Sigmoid colon (tissue), 7 donors: ENCODE measurements at regions of chr1 and their contacts with region 1.

Region 1: DNA sequence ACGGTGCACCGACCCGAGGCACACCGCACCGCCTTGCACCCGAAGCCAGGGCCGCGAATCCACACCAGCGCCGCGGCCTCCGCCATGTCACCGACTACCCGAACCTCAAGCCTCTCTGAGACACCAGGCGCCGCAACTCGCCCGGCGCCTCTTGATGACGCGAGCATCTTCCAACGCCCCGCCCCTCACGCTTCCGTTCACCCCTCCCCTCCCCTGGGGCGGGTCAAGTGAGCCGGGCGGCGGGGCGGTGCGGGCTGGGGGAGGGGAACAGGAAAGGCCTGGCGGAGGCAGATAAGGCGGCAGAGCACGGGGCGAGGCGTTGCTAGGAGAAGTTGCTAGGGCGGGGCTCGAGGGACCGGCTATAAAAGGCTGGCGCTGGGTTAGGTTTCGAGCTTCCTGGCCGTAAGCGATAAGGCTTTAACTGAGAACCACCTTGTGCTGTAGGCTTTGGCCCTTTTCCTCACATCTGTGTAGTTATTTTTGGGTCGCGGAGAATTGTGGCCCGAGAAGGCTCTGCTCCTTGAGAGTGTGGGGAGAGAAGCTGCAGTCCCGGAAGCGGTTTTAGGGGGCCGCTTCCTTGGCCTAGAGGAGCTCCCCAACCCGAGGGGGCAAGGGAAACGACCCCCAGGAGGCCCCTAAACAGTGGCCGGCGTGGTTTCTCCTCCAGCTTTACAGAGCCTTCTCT is at the start of gene SDE2:
- DNase-seq: peak; percentile 100
- H3K4me3 ChIP-seq: peak within 1 kb of the TSS; percentile 56 to 90 (median 81)
- H3K27ac ChIP-seq: peak within 1 kb of the TSS; percentile 95 to 98 (median 97)
- H3K4me1 ChIP-seq: peaks cover 0 to 36% (median 26%) of the 10 kb centered on the region in 4 donors
- H3K27me3 ChIP-seq: no peaks in the 10 kb centered on the region
- CTCF ChIP-seq: peak in 1 of 4 experiments; percentile 20
- EP300 ChIP-seq: peak in 2 of 4 donors; percentile 68 to 84
- POLR2A ChIP-seq: peak; percentile 81 to 87
- total RNA-seq, gene SDE2: 11.1 to 21.9 (median 18.4) TPM

Region 2: DNA sequence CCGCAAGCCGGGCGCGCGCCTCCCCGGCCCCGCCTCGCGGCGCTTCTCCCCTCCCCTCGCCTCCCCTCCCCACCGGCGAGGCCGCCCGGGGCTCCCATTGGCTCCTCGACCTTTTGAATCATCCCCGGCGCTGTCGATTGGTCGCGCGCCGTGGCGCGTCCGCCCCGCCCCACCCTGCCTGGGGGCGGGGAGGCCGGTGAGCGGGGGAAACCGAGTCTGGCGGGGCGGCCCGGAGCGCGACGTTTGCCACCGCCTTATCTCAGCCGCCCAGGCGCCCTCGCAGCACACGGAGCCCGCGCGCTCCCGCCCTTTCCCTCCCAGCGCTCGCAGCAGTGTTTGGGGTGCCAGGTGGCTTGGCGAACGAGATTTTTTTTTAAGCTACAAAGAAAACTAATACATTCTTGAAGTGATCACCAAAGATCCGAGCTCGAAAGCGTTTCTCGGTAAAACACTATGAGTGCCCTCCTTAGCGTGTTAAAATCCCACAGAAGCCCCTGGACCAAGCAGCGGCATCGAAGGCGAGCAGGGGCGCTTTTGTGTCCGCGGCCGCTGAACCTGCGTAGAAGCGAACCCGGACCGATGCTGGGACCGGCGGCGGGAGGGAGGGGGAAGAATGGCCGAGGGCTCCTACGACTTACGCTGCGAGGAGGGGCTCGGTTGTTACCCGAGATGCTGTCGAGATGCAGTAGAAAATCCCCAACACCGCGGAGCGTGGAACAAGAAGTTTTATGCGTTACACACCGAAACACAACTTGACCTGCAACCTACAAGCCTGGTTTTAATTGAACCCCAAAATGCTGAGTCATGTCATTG is 571.1 kb before region 1 on chr1:
- intact Hi-C with region 1: loop called (anchors 5 kb)
- DNase-seq: peak; percentile 97
- H3K4me3 ChIP-seq: peak overlapping the region; percentile 89 to 100 (median 94)
- H3K27ac ChIP-seq: peak overlapping the region; percentile 95 to 100 (median 98)
- H3K4me1 ChIP-seq: peaks cover 0 to 40% (median 32%) of the 10 kb centered on the region in 4 donors
- H3K27me3 ChIP-seq: no peaks in the 10 kb centered on the region
- CTCF ChIP-seq: no peak
- EP300 ChIP-seq: peak in 1 of 4 donors; percentile 2
- POLR2A ChIP-seq: peak; percentile 83 to 86